GM10248 (cell line): ENCODE measurements at regions of chr1 and their contacts with region 1.

Region 1: DNA sequence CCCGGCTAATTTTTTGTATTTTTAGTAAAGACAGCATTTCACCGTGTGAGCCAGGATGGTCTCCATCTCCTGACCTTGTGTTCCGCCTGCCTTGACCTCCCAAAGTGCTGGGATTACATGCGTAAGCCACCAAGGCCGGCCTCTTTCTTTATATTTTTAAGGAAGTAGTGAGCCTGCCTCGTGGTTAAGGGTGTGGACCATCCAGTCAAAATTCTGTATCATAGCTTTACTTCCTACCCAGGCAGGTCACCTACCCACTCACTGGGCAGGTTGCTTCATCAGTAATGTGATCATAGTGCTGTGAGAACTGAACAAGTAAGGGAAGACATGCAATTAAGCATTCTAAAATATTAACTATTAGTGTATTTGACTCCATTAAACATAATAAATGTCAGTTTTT is 8.1 kb upstream of the ACOT7 start:
- DNase-seq: no peak
- CTCF ChIP-seq: no peak

Region 2: GRCh38 chr1:6343506-6344405 is 57.9 kb before region 1 on chr1:
- CTCF ChIA-PET with region 1: interaction called, 67 read pairs
- POLR2A ChIA-PET with region 1: no interaction called
- DNase-seq: peak; percentile 80
- CTCF ChIP-seq: peak; percentile 93

Region 3: DNA sequence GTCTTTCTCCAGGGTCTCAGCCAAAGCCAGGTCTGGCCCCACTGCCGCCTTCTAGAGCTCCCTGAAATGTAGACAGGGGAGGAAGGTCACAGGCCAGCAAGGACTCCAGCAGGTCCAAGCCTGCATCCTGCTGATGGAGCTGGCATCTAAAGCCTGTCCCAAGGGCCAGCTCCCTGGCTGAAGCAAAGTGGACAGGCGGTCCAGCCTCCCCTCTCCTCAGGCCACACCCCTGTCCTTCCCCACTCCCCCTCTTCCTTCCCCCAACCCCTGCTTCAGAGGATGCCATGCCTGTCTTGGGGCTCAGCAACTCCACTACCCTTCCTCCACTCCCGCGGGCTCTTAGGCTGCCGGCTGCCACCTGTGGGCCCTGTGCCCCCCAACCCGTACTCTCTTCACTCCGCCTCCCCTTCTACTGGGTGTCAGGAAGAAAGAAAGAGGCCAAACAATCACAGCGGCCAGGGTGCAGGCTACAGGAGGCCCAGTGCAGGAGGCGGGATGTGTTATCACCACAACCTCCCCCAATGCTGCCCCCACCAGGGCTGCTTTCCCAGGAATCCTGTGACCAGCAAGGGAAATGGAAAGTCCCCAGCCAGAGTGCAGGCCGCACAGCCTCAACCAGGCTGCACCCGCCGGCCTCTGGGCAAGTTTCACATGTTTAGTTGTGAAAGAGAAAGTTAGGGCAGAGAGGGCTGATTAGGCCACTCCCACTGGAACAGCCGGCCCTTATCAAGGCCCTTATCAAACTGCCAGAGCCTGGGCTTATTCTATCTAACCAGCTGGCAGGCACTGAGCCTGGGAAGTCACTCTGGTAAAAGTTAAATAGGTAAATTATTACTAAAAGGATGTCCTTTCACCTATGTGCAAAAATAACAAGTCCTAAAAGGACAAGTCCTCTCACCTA is 42.2 kb before region 1 on chr1:
- CTCF ChIA-PET with region 1: interaction called, 127 read pairs
- POLR2A ChIA-PET with region 1: interaction called, 3 read pairs
- DNase-seq: peak; percentile 82
- CTCF ChIP-seq: no peak

Region 4: GRCh38 chr1:6367381-6368012 is 34.2 kb before region 1 on chr1:
- CTCF ChIA-PET with region 1: interaction called, 127 read pairs
- POLR2A ChIA-PET with region 1: no interaction called
- DNase-seq: no peak
- CTCF ChIP-seq: no peak

Region 5: GRCh38 chr1:6414443-6414844 is 12.8 kb after region 1 on chr1:
- CTCF ChIA-PET with region 1: interaction called, 29 read pairs
- POLR2A ChIA-PET with region 1: no interaction called
- DNase-seq: peak; percentile 76
- CTCF ChIP-seq: peak; percentile 60

Region 6: DNA sequence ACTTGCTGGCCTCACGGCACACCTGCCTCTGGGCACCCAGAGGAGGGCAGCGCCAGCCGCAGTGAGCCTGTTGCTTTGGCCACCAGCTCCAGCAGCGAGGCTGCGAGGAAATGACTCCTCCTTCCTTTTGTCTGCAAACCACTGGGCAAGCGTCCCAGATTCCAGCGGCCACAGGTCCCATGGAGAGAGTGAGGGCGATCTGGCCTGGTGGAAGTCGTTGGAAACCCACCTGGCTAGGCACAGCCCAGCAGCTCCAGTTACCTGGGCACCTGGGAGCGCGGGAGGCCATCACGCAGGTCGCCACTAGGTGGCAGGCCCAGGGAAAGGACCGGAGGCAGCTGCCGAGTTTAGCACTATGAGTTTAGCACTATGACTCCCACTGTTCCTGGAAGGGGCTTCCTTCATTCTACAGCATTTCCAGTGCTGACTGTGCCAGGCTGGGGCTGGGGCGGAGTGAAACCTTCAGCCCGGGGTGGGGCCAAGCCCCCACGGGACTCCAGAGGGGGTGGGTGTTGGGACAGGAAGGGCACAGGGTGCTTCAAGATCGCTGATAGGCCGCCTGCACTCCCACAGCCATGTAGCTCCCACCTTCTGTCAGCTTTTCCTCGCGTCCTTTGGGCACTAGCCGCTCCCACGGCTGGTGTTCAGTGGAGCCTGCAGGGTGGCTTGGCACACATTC is 21.8 kb after region 1 on chr1:
- CTCF ChIA-PET with region 1: interaction called, 24 read pairs
- POLR2A ChIA-PET with region 1: no interaction called
- DNase-seq: peak; percentile 83
- CTCF ChIP-seq: peak; percentile 89

Region 7: DNA sequence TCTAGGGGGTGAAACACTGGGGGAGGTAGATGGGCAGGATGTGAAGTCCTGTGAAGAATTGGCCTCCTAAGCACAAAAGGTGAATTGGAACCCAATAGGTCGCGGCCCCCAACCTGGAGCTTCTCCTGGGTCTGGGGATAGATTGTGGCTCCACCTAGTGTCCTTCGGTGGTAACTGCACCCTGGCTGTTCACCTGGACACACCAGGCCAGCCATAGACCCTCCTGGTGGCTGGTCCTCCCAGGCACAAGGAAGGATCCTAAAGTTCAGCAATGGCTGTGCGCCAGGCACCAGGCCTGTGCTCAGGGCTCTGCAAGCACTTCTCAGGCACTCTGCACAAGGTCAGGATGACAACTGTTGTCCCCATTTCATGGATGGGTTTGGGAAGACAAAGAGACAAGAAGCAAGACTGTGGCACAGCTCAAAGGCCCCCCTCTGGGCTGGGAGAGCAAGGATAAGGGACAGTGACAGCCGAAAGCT is 36.4 kb after region 1 on chr1:
- CTCF ChIA-PET with region 1: interaction called, 12 read pairs
- POLR2A ChIA-PET with region 1: no interaction called
- DNase-seq: peak; percentile 89
- CTCF ChIP-seq: peak; percentile 97

Region 8: DNA sequence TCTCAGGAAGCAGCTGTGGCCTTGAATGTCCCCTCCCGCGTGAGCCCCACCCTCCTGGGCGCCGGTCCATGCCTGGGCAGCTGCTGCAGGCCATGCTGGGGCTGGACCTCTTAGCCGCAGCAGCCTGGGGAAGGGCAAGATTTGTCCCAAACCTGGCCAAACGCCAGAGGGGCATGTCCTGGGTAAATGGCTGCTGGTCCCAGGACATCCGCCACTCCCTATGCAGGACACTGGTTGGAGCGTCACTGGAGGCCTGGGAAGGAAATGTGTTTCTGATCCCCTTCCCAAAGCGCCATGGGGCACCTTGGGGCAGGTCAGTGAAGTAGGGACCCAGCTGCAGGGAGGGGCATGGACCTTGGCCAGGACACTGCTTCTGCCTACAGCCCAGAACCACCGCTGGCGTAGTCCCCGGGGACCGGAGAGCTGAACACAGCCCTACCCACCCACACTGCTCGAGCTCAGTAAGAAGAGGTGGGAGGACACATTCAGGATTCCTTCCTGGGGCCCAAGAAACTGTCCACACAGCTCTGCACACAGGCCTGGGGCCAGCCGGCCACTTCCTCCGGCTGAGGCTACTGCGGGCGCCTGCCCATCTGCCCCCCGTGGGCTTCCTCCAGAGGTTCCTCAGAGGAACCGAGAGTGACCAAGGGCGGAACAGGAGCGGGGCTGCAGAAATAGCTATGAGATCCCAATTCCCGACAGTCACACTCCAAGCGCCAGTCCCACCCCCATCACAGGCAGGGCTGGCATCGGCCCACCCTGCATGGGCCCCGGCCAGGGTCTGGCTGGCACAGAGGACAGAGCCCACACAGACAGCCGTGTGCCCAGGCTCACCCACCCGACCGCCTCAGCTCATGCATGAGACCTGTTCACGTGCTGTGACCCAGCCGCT is 100.6 kb after region 1 on chr1:
- CTCF ChIA-PET with region 1: no interaction called
- POLR2A ChIA-PET with region 1: no interaction called
- DNase-seq: no peak
- CTCF ChIP-seq: no peak